ENCODE measurements at regions of chr5 and their contacts with region 1.

Region 1: DNA sequence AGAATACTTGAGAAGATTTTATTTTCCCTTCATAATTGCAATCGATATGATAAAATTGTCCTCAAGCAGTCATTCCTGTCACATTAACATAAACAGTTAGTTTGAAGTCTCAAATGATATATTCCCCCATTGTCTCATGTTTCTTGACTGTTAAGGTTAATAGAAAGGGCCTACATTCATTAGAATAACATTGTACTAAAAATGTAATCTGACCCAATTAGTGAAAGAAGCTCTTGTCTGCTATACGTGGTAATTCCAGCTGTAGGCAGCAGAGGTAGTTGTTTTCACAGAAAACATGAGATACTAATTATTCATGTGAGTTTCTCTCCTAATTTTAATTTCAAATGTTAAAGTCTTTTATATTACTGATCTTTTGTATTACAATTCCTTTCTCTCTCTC is 25.9 kb upstream of the AP3B1 start:
- DNase-seq: peak; percentile 8
- ATAC-seq: no peak
- H3K4me3 Mint-ChIP-seq: no peak overlapping the region
- H3K27ac Mint-ChIP-seq: no peak overlapping the region
- H3K4me1 Mint-ChIP-seq: no peaks in the 10 kb centered on the region
- H3K27me3 Mint-ChIP-seq: no peaks in the 10 kb centered on the region

Region 2: DNA sequence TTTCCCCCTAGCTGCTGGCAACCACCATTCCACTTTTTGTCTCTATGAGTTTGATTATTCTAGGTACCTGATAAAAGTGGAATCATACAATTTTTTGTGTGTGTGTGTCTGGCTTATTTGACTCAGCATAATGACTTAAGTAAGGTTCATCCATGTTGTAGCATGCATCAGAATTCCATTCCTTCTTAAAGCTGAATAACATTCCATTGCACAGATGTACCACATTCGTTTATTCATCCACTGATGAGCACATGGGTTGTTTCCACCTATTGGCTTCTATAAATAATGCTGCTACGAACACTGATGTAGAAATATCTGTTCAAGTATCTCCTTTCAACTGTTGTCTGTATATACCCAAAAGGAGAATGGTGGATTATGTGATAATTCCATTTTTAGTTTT is 59.6 kb before region 1 on chr5:
- CTCF ChIA-PET with region 1: no interaction called
- POLR2A ChIA-PET with region 1: no interaction called
- intact Hi-C with region 1: no loop called
- DNase-seq: no peak
- ATAC-seq: no peak
- H3K4me3 Mint-ChIP-seq: no peak overlapping the region
- H3K27ac Mint-ChIP-seq: no peak overlapping the region
- H3K4me1 Mint-ChIP-seq: peaks cover 6% of the 10 kb centered on the region
- H3K27me3 Mint-ChIP-seq: no peaks in the 10 kb centered on the region

Region 3: GRCh38 chr5:78490709-78491485 is 170.5 kb after region 1 on chr5:
- CTCF ChIA-PET with region 1: no interaction called
- POLR2A ChIA-PET with region 1: no interaction called
- intact Hi-C with region 1: loop called in 1 of 2 experiments (anchors 5 kb)
- DNase-seq: no peak
- ATAC-seq: no peak
- H3K4me3 Mint-ChIP-seq: no peak overlapping the region
- H3K27ac Mint-ChIP-seq: no peak overlapping the region
- H3K4me1 Mint-ChIP-seq: no peaks in the 10 kb centered on the region
- H3K27me3 Mint-ChIP-seq: no peaks in the 10 kb centered on the region

Region 4: GRCh38 chr5:78509884-78510769 is 189.7 kb after region 1 on chr5:
- CTCF ChIA-PET with region 1: no interaction called
- POLR2A ChIA-PET with region 1: no interaction called
- intact Hi-C with region 1: no loop called
- DNase-seq: peak; percentile 54
- ATAC-seq: peak; percentile 79
- H3K4me3 Mint-ChIP-seq: peak overlapping the region; percentile 69
- H3K27ac Mint-ChIP-seq: no peak overlapping the region
- H3K4me1 Mint-ChIP-seq: peaks cover 11% of the 10 kb centered on the region
- H3K27me3 Mint-ChIP-seq: peaks cover 60% of the 10 kb centered on the region

Region 5: DNA sequence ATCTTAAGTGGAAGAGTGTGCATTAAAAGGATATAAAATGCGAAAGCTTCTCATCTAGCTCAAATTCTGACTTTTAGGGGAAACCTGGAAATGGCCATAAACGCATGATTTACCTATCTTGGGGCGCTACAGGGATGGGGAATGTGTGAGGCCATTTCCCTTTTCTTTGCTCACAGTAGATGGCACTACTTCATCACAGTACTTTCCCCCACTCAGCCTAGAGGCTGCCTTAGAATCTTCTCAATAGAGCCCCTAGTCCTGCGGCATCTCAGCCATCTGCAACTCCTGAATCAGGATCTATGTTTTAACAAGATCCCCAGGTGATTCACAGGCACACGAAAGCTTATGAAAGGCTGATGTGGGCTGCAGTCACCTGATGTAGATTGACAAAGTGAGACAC is 217.4 kb after region 1 on chr5:
- CTCF ChIA-PET with region 1: interaction called, 6 read pairs
- POLR2A ChIA-PET with region 1: no interaction called
- intact Hi-C with region 1: loop called in 1 of 2 experiments (anchors 1 kb)
- DNase-seq: no peak
- ATAC-seq: peak; percentile 51
- H3K4me3 Mint-ChIP-seq: no peak overlapping the region
- H3K27ac Mint-ChIP-seq: no peak overlapping the region
- H3K4me1 Mint-ChIP-seq: no peaks in the 10 kb centered on the region
- H3K27me3 Mint-ChIP-seq: no peaks in the 10 kb centered on the region

Measured in activated CD4-positive, alpha-beta T cell treated with anti-CD3 and anti-CD28 coated beads for 36 hours (primary cell).